HAP-1 (cell line): ENCODE measurements at regions of chr6 and their contacts with region 1.

Region 1: DNA sequence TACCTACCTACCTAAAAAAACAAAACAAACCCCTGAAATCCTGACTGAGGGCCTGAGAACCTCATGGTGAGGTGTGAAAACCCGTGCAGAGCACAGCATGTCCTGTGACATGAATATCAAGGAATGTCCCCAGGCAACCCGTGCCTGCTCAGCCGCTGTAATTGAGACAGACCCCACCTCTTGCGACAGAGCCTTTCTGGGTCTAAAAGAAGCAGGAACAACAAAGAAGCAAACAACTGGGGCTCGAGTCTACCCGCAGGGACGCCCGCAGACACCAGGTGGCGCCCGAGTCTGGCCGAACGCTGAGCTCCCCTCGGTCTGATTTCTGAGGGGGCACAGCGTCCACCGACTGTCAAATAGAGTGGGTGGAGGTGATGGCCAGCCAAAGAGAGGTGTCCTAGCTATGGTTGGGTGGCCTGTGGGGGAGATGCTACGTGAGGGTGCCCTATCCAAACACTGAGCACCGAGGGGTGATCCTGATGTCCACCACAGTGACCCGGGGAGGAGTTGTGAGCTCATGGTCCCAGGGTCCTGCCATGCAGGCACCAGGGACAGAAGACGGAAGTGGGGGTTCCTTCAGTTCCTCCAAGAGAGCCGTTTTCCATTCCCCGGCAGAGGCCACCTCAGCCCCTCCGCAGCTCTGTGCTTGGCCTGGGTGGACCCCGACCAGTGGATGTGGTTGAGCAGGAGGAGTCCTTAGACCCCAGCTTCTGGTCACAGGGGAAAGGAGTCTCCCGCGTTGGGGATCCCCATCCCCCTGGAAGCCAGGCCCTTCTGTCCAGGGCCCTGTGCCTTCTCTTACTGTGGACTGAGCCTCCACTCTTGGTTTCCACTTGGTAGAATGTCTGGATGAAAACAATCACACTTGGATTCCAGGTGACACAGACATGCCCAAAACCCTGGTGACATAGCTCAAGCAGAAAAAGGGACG is 268.2 kb downstream of the CDC5L start:
- DNase-seq: peak; percentile 73 to 87
- H3K4me3 ChIP-seq: no peak overlapping the region
- H3K4me1 ChIP-seq: peaks cover 3% of the 10 kb centered on the region; the same call in 1 of the 2 replicates
- H3K27me3 ChIP-seq: peaks cover 9% of the 10 kb centered on the region; the same call in 1 of the 2 replicates

Region 2: GRCh38 chr6:45421709-45422502 is 766.2 kb after region 1 on chr6:
- in situ Hi-C with region 1: loop called (anchors 25 kb)
- DNase-seq: peak in 1 of 2 experiments; percentile 52
- H3K4me3 ChIP-seq: peak overlapping the region; percentile 42
- H3K4me1 ChIP-seq: peaks cover 4% of the 10 kb centered on the region; the same call in 1 of the 2 replicates
- H3K27me3 ChIP-seq: peaks cover 85% of the 10 kb centered on the region